PC-9 (cell line): ENCODE measurements at regions of chr15 and their contacts with region 1.

Region 1: DNA sequence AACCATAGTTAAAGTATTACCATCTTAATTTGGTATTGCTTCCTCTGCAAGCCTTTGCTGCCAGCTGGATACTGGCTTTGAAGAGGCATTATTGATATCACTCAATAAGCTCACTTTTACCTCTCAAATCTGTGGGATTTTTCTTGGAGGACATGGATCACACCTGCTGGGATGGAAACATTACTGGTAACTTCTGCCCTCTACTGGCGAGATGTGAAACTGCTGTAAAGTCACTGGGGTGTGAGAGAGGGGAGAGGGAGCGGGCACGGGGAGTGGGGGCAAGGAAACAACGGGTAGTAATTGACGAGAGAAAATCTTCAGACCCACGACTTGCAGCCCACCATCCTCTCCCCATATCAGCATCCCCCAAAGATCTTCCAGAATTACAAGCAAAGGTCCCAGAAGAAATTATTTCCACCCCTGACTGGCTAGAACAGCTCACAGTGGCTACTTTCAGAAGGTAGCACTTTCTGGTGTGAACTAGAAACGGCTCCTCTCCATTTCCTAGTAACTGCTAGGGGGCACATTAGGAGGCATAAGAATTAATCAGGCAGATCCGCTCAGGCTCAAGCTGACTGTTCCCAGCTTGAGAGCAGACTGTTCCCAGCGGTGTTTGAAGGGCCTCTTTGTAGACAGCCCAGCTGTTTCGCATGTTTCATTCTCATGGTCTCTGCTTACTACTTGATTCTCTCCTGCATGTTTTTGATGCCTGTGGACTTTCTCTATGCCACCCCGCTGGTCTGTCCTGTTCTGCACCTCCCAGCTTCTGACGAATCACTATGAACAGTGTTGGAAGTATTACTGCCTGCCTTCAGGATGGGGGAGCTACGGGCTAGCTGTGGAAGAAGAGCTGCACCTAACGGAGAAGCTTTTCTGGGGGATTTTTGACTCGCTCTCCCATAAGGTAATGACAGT is 230.4 kb upstream of the CHRM5 start:
- DNase-seq: peak in 1 of 2 experiments; percentile 31
- H3K4me3 ChIP-seq: no peak overlapping the region
- H3K27ac ChIP-seq: no peak overlapping the region
- H3K4me1 ChIP-seq: no peaks in the 10 kb centered on the region
- H3K27me3 ChIP-seq: no peaks in the 10 kb centered on the region
- CTCF ChIP-seq: peak; percentile 84

Region 2: DNA sequence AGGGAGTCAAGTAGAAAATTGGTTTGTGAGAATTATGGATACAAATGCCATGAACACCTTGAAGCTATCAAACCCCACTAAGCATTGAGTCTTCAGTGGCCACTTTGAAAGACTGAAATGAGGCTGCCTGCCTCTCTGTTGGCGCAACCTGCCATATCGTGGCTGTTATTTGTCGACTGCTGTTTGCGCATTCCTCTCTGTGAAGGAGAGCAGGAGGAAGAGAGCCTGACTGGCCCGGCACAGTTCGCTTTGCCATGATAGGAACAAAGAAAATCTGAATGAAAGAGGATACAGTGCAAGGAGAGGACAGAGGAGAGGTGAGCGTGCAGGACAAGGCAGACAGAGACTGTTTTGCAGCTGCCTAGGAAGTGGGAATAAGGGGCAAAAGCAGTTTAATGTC is 137.7 kb before region 1 on chr15:
- CTCF ChIA-PET with region 1: no interaction called
- POLR2A ChIA-PET with region 1: no interaction called
- intact Hi-C with region 1: no loop called
- DNase-seq: no peak
- H3K4me3 ChIP-seq: no peak overlapping the region
- H3K27ac ChIP-seq: no peak overlapping the region
- H3K4me1 ChIP-seq: no peaks in the 10 kb centered on the region
- H3K27me3 ChIP-seq: no peaks in the 10 kb centered on the region
- CTCF ChIP-seq: no peak

Region 3: DNA sequence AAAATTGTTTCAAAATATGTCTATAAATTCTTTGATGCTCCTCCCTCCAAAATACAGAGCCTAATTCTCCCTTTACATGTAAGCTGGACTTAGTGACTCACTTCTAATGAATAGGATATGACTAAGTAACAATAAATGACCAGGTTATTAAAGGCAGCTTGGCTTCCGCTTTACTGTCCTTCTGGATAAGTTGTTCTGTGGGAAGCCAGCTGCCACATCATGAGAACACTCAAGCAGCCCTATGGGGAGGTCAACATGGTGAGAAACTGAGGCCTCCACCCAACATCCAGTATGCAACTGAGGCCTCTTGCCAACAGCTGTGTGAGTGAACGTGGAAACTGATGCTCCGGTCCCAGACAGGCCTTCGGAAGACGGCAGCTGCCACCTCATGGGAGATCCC is 17.0 kb before region 1 on chr15:
- CTCF ChIA-PET with region 1: no interaction called
- POLR2A ChIA-PET with region 1: interaction called, 10 read pairs
- intact Hi-C with region 1: no loop called
- DNase-seq: peak in 1 of 2 experiments; percentile 37
- H3K4me3 ChIP-seq: no peak overlapping the region
- H3K27ac ChIP-seq: no peak overlapping the region
- H3K4me1 ChIP-seq: no peaks in the 10 kb centered on the region
- H3K27me3 ChIP-seq: no peaks in the 10 kb centered on the region
- CTCF ChIP-seq: no peak

Region 4: GRCh38 chr15:33963831-33964664 is 226.1 kb after region 1 on chr15:
- CTCF ChIA-PET with region 1: interaction called, 7 read pairs
- POLR2A ChIA-PET with region 1: no interaction called
- intact Hi-C with region 1: loop called (anchors 1 kb)
- DNase-seq: no peak
- H3K4me3 ChIP-seq: no peak overlapping the region
- H3K27ac ChIP-seq: no peak overlapping the region
- H3K4me1 ChIP-seq: no peaks in the 10 kb centered on the region
- H3K27me3 ChIP-seq: no peaks in the 10 kb centered on the region
- CTCF ChIP-seq: peak; percentile 66

Region 5: GRCh38 chr15:33994005-33994615 is 256.2 kb after region 1 on chr15:
- CTCF ChIA-PET with region 1: no interaction called
- POLR2A ChIA-PET with region 1: no interaction called
- intact Hi-C with region 1: loop called (anchors 1 kb)
- DNase-seq: peak in 1 of 2 experiments; percentile 14
- H3K4me3 ChIP-seq: no peak overlapping the region
- H3K27ac ChIP-seq: no peak overlapping the region
- H3K4me1 ChIP-seq: no peaks in the 10 kb centered on the region
- H3K27me3 ChIP-seq: no peaks in the 10 kb centered on the region
- CTCF ChIP-seq: peak; percentile 61